Activated CD4-positive, alpha-beta T cell treated with anti-CD3 and anti-CD28 coated beads, Interleukin-2, amount 10 ng/mL, durations not matched to agents 7 days and 5 days (primary cell): ENCODE measurements at regions of chr9 and their contacts with region 1.

Region 1: DNA sequence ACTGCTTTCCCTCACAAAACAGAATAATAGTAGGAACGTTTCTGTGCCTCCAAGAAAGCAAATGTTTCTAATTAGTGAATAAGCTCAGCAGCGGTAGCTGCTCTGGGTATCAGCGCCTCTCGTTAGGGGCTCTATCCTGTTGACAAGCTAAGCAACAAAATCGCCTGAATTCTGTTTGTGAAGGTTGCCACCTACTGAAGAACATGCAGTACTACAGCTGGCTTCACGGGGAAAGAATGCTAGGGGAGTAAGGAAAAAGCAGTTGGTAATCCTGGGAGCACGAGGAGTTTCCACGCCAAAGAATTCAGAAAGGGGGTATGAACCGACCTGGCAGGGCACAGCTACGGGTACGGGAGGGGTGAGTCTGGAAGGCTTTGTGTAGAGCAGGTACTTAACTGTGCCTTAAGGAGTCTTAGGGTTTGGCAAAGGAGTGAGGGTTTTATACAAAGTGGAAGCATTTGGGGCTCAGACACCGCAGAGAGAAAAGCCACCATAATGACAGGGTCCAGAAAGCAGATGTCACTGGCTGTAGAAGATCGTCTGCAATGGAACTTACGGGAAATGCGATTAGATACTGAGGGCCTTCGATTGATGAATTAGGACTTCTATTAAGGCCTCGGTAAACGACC is 171.7 kb downstream of the TTC39B start:
- DNase-seq: peak; percentile 57
- H3K4me3 Mint-ChIP-seq: no peak overlapping the region
- H3K27ac Mint-ChIP-seq: no peak overlapping the region
- H3K4me1 Mint-ChIP-seq: peaks cover 8% of the 10 kb centered on the region
- H3K27me3 Mint-ChIP-seq: no peaks in the 10 kb centered on the region

Region 2: GRCh38 chr9:15101095-15101494 is 34.2 kb before region 1 on chr9:
- CTCF ChIA-PET with region 1: interaction called, 12 read pairs
- POLR2A ChIA-PET with region 1: no interaction called
- DNase-seq: no peak
- H3K4me3 Mint-ChIP-seq: no peak overlapping the region
- H3K27ac Mint-ChIP-seq: no peak overlapping the region
- H3K4me1 Mint-ChIP-seq: no peaks in the 10 kb centered on the region
- H3K27me3 Mint-ChIP-seq: peaks cover 11% of the 10 kb centered on the region